H1 (cell line): ENCODE measurements at regions of chr5 and their contacts with region 1.

Region 1: GRCh38 chr5:142915813-142916424 is 145.7 kb downstream of the ARHGAP26 start:
- DNase-seq: peak; percentile 38 to 66
- H3K4me3 ChIP-seq: no peak overlapping the region
- H3K27ac ChIP-seq: no peak overlapping the region
- H3K4me1 ChIP-seq: no peaks in the 10 kb centered on the region
- H3K27me3 ChIP-seq: no peaks in the 10 kb centered on the region
- CTCF ChIP-seq: peak; percentile 76 to 89 (median 85)
- EP300 ChIP-seq: no peak
- POLR2A ChIP-seq: no peak
- RAD21 ChIP-seq: peak; percentile 75 to 83

Region 2: GRCh38 chr5:141664732-141665461 is 1251.0 kb before region 1 on chr5:
- CTCF ChIA-PET with region 1: no interaction called
- POLR2A ChIA-PET with region 1: no interaction called
- DNase-seq: peak; percentile 66 to 94
- H3K4me3 ChIP-seq: no peak overlapping the region
- H3K27ac ChIP-seq: no peak overlapping the region
- H3K4me1 ChIP-seq: no peaks in the 10 kb centered on the region
- H3K27me3 ChIP-seq: no peaks in the 10 kb centered on the region
- CTCF ChIP-seq: peak; percentile 91 to 96 (median 91)
- EP300 ChIP-seq: no peak
- POLR2A ChIP-seq: no peak
- RAD21 ChIP-seq: peak; percentile 90 to 95

Region 3: DNA sequence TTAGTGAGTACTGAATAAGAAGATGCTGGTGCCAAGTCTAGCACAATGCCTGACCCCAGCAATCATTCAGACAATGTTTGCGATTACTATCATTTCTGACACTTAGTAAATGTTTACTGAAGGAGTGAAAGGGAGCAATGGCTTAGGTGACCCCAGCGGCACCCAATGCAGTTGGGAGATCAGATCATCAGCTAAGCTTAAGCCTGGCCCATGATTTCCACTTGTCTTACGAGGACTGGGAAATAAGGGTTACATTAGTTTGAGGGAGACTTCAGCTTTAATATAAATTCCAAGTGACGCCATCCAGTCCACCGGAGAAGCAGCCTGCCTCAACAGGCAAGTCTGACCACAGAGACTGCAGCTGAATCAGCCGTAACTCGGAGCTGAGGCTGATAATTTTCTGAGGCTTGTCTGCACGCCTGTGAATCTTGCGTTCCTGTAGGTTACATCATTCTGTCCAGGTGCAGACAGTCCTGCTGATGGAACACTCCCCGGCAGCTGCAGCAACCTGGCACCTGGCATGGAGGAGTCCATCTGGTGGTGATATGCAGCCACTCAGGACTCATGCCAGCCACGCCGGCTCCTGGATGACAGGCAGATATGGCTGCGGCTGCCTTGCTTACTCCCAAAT is 195.2 kb before region 1 on chr5:
- CTCF ChIA-PET with region 1: interaction called, 118 read pairs
- POLR2A ChIA-PET with region 1: interaction called, 3 read pairs
- DNase-seq: no peak
- H3K4me3 ChIP-seq: no peak overlapping the region
- H3K27ac ChIP-seq: no peak overlapping the region
- H3K4me1 ChIP-seq: peaks cover 2 to 16% (median 11%) of the 10 kb centered on the region in 4 experiments
- H3K27me3 ChIP-seq: no peaks in the 10 kb centered on the region; a peak in 1 of 7 replicates
- CTCF ChIP-seq: no peak
- EP300 ChIP-seq: no peak
- POLR2A ChIP-seq: no peak
- RAD21 ChIP-seq: no peak

Region 4: GRCh38 chr5:142874537-142874936 is 41.4 kb before region 1 on chr5:
- CTCF ChIA-PET with region 1: interaction called, 31 read pairs
- POLR2A ChIA-PET with region 1: no interaction called
- DNase-seq: no peak
- H3K4me3 ChIP-seq: no peak overlapping the region
- H3K27ac ChIP-seq: no peak overlapping the region
- H3K4me1 ChIP-seq: peaks cover 0 to 3% (median 2%) of the 10 kb centered on the region in 4 experiments; a peak in 2 of 7 replicates
- H3K27me3 ChIP-seq: no peaks in the 10 kb centered on the region
- CTCF ChIP-seq: no peak
- EP300 ChIP-seq: no peak
- POLR2A ChIP-seq: no peak
- RAD21 ChIP-seq: no peak

Region 5: GRCh38 chr5:142888469-142889085 is 27.3 kb before region 1 on chr5:
- CTCF ChIA-PET with region 1: interaction called, 98 read pairs
- POLR2A ChIA-PET with region 1: no interaction called
- DNase-seq: no peak
- H3K4me3 ChIP-seq: no peak overlapping the region
- H3K27ac ChIP-seq: no peak overlapping the region
- H3K4me1 ChIP-seq: peaks cover 0 to 11% (median 0%) of the 10 kb centered on the region in 4 experiments; a peak in 1 of 7 replicates
- H3K27me3 ChIP-seq: no peaks in the 10 kb centered on the region
- CTCF ChIP-seq: peak in 2 of 3 experiments; percentile 61 to 69; a peak in 2 of 4 replicates
- EP300 ChIP-seq: no peak
- POLR2A ChIP-seq: no peak
- RAD21 ChIP-seq: peak; percentile 89 to 91

Region 6: GRCh38 chr5:142929587-142929986 is 13.7 kb after region 1 on chr5:
- CTCF ChIA-PET with region 1: interaction called, 23 read pairs
- POLR2A ChIA-PET with region 1: no interaction called
- DNase-seq: no peak
- H3K4me3 ChIP-seq: no peak overlapping the region
- H3K27ac ChIP-seq: no peak overlapping the region
- H3K4me1 ChIP-seq: peaks cover 0 to 3% (median 0%) of the 10 kb centered on the region in 4 experiments; a peak in 3 of 7 replicates
- H3K27me3 ChIP-seq: no peaks in the 10 kb centered on the region
- CTCF ChIP-seq: no peak
- EP300 ChIP-seq: no peak
- POLR2A ChIP-seq: no peak
- RAD21 ChIP-seq: no peak